ENCODE measurements at regions of chr17 and their contacts with region 1.

Region 1: DNA sequence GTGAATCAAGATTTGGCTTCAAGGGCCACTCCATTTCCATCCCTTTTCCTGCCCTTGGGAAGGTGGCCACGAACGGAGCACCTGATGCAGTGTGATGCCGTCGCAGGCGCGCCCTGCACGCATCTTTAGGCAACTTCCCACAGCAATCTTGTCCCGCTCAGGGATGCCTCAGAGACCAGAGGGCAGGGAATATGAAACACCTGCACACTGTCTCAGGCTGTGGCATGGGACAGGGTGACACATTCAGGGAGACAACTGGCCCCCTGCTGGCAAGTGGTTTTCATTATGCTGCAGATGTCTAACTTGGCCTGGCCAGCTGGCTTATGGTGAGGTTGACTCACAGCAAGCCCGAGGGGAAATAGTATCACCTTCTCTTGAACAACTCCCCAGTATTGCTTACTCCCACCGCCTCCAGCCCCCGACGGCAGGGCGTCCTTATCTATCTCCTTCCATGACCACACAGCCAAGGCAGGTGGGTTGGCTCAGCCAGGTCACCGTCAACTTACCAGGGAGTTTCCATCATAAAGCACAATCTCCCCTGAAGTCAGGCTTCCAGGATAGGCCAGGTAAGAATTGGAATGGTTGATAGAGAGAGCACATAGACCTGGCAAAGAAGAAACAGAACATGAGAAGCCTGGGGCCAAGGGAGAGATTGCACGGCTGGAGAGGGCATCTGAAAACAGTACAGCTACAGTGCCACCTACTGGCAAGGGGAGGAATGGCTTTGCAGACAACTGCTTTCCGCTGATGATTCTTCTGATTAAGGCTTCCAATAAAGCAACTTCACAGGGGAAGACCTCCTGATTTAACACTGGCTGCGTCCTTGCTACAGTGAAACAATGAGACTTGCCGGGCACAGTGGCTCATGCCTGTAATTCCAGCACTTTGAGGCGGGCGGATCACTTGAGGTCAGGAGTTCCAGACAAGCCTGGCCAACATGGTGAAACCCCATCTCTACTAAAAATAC is 21.1 kb downstream of the WIPI1 start:
- DNase-seq: peak; percentile 62 to 80 (median 75)
- H3K4me3 ChIP-seq: no peak overlapping the region
- H3K27ac ChIP-seq: no peak overlapping the region
- H3K4me1 ChIP-seq: peaks cover 1% of the 10 kb centered on the region
- H3K27me3 ChIP-seq: no peaks in the 10 kb centered on the region
- CTCF ChIP-seq: peak; percentile 75 to 87 (median 81)
- EP300 ChIP-seq: no peak
- POLR2A ChIP-seq: no peak

Region 2: GRCh38 chr17:68210570-68211315 is 225.4 kb before region 1 on chr17:
- intact Hi-C with region 1: no loop called
- DNase-seq: no peak
- H3K4me3 ChIP-seq: no peak overlapping the region
- H3K27ac ChIP-seq: no peak overlapping the region
- H3K4me1 ChIP-seq: no peaks in the 10 kb centered on the region
- H3K27me3 ChIP-seq: no peaks in the 10 kb centered on the region
- CTCF ChIP-seq: no peak
- EP300 ChIP-seq: no peak
- POLR2A ChIP-seq: no peak

Region 3: GRCh38 chr17:68260051-68260762 is 176.0 kb before region 1 on chr17:
- intact Hi-C with region 1: loop called in 3 of 4 experiments (anchors 10 kb)
- DNase-seq: no peak
- H3K4me3 ChIP-seq: no peak overlapping the region
- H3K27ac ChIP-seq: no peak overlapping the region
- H3K4me1 ChIP-seq: no peaks in the 10 kb centered on the region
- H3K27me3 ChIP-seq: no peaks in the 10 kb centered on the region
- CTCF ChIP-seq: no peak
- EP300 ChIP-seq: no peak
- POLR2A ChIP-seq: no peak

Region 4: GRCh38 chr17:68674029-68674940 is 238.1 kb after region 1 on chr17:
- intact Hi-C with region 1: no loop called
- DNase-seq: no peak
- H3K4me3 ChIP-seq: no peak overlapping the region
- H3K27ac ChIP-seq: no peak overlapping the region
- H3K4me1 ChIP-seq: peaks cover 2% of the 10 kb centered on the region
- H3K27me3 ChIP-seq: no peaks in the 10 kb centered on the region
- CTCF ChIP-seq: no peak
- EP300 ChIP-seq: no peak
- POLR2A ChIP-seq: no peak